H1 (cell line): ENCODE measurements at regions of chr17 and their contacts with region 1.

Region 1: DNA sequence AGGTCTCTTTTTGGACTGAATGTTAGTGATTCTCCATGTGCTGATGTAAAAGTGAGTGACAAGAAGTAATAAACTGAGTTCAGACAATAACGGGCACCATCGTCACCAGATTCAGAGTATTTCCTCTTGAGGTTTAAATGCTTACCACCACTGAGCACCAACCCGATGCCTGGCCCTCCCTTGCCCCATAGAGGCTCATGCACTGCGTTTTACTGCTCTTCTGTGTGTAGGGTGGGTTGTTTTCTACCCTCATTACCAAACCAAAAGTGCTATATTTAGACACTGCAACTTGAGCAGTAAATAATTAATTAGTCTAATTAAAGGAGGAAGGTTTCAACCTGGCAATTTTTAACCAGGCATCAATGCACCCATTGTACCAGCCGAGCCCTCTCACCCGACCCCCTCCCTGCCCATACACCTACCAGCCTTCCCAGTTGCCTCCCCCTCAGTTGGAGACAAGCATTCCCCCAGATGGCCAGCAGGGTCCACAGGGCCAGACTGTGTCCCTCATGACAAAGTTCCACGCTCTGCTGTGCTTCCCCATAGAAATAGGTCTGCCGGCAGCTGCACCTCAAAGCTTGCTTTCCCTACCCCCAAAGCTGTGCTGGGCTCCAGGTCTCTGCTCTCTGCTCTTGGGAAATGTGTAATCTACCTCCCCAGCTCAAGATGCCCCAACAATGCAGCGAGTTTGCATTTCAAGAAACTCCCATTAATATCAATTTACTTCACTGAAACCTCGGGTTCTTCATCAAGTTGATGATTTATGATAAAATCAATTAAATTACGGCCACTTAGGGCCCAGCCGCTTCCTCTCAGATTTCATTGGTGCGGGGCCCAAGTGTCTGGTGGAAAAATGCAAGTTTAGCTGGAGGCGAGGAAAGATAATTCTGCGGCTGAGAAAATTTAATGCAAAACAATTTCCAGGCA is 16.0 kb downstream of the HOXB4 start:
- DNase-seq: no peak
- H3K4me3 ChIP-seq: no peak overlapping the region
- H3K27ac ChIP-seq: no peak overlapping the region
- H3K4me1 ChIP-seq: peaks cover 0 to 8% (median 3%) of the 10 kb centered on the region in 4 experiments; a peak in 5 of 7 replicates
- H3K27me3 ChIP-seq: peaks cover 99 to 100% (median 100%) of the 10 kb centered on the region in 4 experiments
- CTCF ChIP-seq: peak; percentile 10 to 43 (median 36); a peak in 3 of 4 replicates
- EP300 ChIP-seq: no peak
- POLR2A ChIP-seq: no peak
- RAD21 ChIP-seq: no peak

Region 2: GRCh38 chr17:48610282-48611211 is 48.4 kb after region 1 on chr17 and contains the start of gene HOXB7:
- CTCF ChIA-PET with region 1: interaction called, 10 read pairs
- POLR2A ChIA-PET with region 1: interaction called, 4 read pairs
- DNase-seq: no peak
- H3K4me3 ChIP-seq: peak within 1 kb of the TSS in 3 of 4 experiments; percentile 2 to 46 (median 4); a peak in 4 of 8 replicates
- H3K27ac ChIP-seq: no peak within 1 kb of the TSS
- H3K4me1 ChIP-seq: peaks cover 0 to 7% (median 4%) of the 10 kb centered on the region in 4 experiments; a peak in 5 of 7 replicates
- H3K27me3 ChIP-seq: peaks cover 96 to 100% (median 99%) of the 10 kb centered on the region in 4 experiments
- CTCF ChIP-seq: no peak
- EP300 ChIP-seq: no peak
- POLR2A ChIP-seq: no peak
- RAD21 ChIP-seq: no peak
- total RNA-seq, gene HOXB7: not detected in 2 replicates

Region 3: GRCh38 chr17:48663134-48663924 is 101.2 kb after region 1 on chr17:
- CTCF ChIA-PET with region 1: no interaction called
- POLR2A ChIA-PET with region 1: no interaction called
- DNase-seq: no peak
- H3K4me3 ChIP-seq: no peak overlapping the region
- H3K27ac ChIP-seq: no peak overlapping the region
- H3K4me1 ChIP-seq: no peaks in the 10 kb centered on the region
- H3K27me3 ChIP-seq: peaks cover 0 to 5% (median 0%) of the 10 kb centered on the region in 4 experiments; a peak in 1 of 7 replicates
- CTCF ChIP-seq: peak; percentile 26 to 40 (median 32); a peak in 3 of 4 replicates
- EP300 ChIP-seq: no peak
- POLR2A ChIP-seq: no peak
- RAD21 ChIP-seq: peak in 1 of 2 experiments; percentile 41; a peak in 1 of 4 replicates